ENCODE measurements at regions of chr17 and their contacts with region 1.

Region 1: DNA sequence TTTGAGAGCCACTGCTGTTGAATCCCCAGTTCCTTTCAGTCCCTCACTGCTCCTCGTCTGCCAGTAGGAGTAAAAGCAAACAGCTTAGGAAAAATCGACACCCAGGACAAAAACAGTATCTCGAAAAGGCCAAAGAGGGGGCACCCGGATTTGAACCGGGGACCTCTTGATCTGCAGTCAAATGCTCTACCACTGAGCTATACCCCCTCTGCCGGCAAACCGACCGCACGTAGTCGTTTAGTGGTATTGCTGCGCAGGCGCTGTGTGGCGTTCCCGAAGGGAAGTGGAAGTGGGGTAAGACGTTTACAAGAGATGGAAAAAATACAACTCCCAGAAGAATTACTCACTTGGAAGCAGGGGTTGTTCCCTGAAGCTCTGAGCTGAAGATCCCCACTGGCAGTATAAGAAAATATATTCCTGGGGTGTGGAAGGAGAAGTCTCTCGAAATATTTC is 2.2 kb upstream of the PLXDC1 start:
- DNase-seq: peak; percentile 92
- ATAC-seq: peak; percentile 54
- H3K4me3 Mint-ChIP-seq: peak overlapping the region; percentile 97
- H3K27ac Mint-ChIP-seq: peak overlapping the region; percentile 99
- H3K4me1 Mint-ChIP-seq: peaks cover 36% of the 10 kb centered on the region
- H3K27me3 Mint-ChIP-seq: peaks cover 38% of the 10 kb centered on the region
- CTCF ChIP-seq: no peak

Region 2: DNA sequence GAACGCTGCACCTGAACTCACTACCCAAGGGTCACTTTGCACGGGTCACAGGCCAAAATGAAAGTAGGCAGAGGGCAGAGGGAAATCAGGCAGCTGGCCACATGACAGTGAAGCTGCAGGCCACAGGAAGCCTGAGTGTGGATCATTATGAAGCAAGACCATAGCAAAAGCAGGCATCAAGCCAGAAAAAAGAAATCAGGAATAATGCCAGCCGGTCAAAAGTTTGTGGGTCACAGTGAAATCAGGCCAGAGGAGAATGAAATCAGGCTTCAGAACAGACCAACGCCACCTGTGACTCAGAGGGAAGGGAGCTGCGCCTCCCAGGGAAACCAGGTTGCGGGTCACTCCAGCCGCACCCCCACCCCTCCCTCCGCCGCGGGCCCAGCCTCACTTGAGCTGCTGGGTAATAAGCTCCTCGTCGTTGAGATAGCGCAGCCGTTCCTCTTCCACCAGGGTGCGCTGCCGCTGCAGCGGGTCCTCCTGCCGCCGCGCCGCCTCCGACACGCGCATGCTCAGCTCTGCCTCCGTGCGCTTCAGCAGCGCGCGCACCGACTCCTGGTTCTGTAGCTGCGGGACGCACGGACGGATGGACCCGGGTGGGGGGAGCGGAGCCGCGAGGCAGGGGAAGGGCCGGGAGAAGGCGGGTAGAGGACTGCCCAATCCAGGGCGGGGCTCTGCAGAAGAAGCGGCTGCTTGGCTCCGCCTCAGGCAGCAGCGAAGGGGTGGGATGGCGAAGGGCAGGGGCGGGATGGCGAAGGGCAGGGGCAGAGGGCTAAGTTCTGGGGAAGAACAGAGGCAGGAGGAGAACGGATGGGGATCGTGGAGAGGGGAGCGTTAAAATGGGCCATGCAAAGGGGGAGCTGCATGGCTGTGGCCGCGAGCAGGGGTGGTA is 595.5 kb before region 1 on chr17:
- CTCF ChIA-PET with region 1: interaction called, 4 read pairs
- POLR2A ChIA-PET with region 1: no interaction called
- intact Hi-C with region 1: loop called (anchors 1 kb)
- DNase-seq: peak; percentile 86
- ATAC-seq: peak; percentile 80
- H3K4me3 Mint-ChIP-seq: peak overlapping the region; percentile 91
- H3K27ac Mint-ChIP-seq: peak overlapping the region; percentile 31
- H3K4me1 Mint-ChIP-seq: peaks cover 25% of the 10 kb centered on the region
- H3K27me3 Mint-ChIP-seq: peaks cover 18% of the 10 kb centered on the region
- CTCF ChIP-seq: no peak

Region 3: DNA sequence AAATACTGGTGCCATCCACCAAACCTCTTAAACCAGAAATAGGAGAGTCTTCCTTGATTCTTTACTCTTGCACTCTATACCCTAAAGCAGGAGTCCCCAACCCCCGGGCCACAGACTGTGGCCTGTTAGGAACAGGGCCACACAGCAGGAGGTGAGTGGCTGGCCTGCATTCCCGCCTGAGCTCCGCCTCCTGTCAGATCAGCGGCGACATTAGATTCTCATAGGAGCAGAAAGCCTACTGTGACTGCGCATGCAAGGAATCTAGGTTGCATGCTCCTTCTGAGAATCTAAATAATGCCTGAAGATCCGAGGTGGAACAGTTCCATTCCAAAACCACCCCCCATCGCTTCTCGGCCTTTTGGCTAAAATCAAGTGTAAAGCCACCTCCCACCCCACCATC is 517.6 kb before region 1 on chr17:
- CTCF ChIA-PET with region 1: no interaction called
- POLR2A ChIA-PET with region 1: no interaction called
- intact Hi-C with region 1: no loop called
- DNase-seq: no peak
- ATAC-seq: no peak
- H3K4me3 Mint-ChIP-seq: no peak overlapping the region
- H3K27ac Mint-ChIP-seq: no peak overlapping the region
- H3K4me1 Mint-ChIP-seq: no peaks in the 10 kb centered on the region
- H3K27me3 Mint-ChIP-seq: peaks cover 19% of the 10 kb centered on the region
- CTCF ChIP-seq: no peak

Region 4: GRCh38 chr17:38735161-38735997 is 418.2 kb before region 1 on chr17:
- CTCF ChIA-PET with region 1: no interaction called
- POLR2A ChIA-PET with region 1: no interaction called
- intact Hi-C with region 1: loop called (anchors 1 kb)
- DNase-seq: peak; percentile 76
- ATAC-seq: peak; percentile 39
- H3K4me3 Mint-ChIP-seq: no peak overlapping the region
- H3K27ac Mint-ChIP-seq: no peak overlapping the region
- H3K4me1 Mint-ChIP-seq: peaks cover 26% of the 10 kb centered on the region
- H3K27me3 Mint-ChIP-seq: peaks cover 5% of the 10 kb centered on the region
- CTCF ChIP-seq: no peak

Region 5: DNA sequence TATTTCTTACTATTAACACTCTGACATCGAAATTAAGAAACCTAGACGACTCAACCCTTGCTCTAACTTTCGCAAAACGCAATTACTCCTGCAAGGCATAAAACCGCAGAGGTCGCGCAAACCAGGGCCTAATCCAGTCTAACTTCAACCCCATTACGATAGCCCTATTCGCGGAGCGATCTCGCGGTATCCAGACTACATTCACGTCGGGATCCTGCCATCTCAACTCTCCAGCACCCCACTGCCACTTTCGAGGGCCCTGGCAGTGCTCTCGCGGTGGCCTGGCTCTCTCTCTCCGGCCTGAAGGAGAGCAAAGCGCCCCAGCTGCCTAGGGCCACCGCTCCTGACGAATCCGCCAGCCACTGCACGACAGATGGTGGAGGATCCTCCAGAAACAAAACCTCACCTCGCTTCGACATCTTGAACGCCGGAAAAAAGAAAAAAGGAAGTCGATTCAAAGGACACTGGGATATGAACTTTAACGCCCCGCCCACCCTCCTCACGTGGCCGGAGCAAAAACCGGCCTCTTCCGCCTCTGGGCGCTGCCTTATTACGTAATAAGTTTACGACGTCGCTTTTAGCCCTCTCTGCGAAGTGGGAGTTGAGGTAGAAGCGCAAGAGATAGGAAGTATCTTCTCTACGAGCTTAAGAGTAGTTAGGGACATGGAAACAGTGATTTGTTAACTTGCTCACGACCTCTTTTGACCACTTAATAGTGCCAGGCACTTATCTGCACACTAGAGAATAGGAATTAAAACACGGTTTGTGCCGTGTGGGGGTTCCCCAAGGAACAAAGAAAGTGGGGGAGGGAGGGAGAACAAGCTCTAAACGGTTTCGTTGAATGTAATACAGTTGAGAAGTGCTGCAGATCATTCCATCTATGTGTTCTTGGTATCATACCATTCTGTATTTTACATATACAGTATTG is 300.1 kb before region 1 on chr17 and contains the start of gene RPL23:
- CTCF ChIA-PET with region 1: interaction called, 4 read pairs
- POLR2A ChIA-PET with region 1: interaction called, 16 read pairs
- intact Hi-C with region 1: loop called (anchors 1 kb)
- DNase-seq: peak; percentile 79
- ATAC-seq: peak; percentile 86
- H3K4me3 Mint-ChIP-seq: peak within 1 kb of the TSS; percentile 99
- H3K27ac Mint-ChIP-seq: peak within 1 kb of the TSS; percentile 100
- H3K4me1 Mint-ChIP-seq: peaks cover 43% of the 10 kb centered on the region
- H3K27me3 Mint-ChIP-seq: no peaks in the 10 kb centered on the region
- CTCF ChIP-seq: no peak
- total RNA-seq, gene RPL23: 2,652 and 3,293 TPM in 2 replicates

Region 6: GRCh38 chr17:38967290-38967738 is 186.3 kb before region 1 on chr17 and contains the start of gene FBXO47:
- CTCF ChIA-PET with region 1: interaction called, 3 read pairs
- POLR2A ChIA-PET with region 1: interaction called, 7 read pairs
- intact Hi-C with region 1: loop called (anchors 5 kb)
- DNase-seq: peak; percentile 64
- ATAC-seq: peak; percentile 99
- H3K4me3 Mint-ChIP-seq: peak within 1 kb of the TSS; percentile 78
- H3K27ac Mint-ChIP-seq: peak within 1 kb of the TSS; percentile 85
- H3K4me1 Mint-ChIP-seq: peaks cover 10% of the 10 kb centered on the region
- H3K27me3 Mint-ChIP-seq: no peaks in the 10 kb centered on the region
- CTCF ChIP-seq: no peak
- total RNA-seq, gene FBXO47: not detected in 2 replicates

Region 7: GRCh38 chr17:39164675-39165143 is 11.1 kb after region 1 on chr17:
- CTCF ChIA-PET with region 1: interaction called, 42 read pairs
- POLR2A ChIA-PET with region 1: interaction called, 18 read pairs
- intact Hi-C with region 1: loop called (anchors 1 kb)
- DNase-seq: peak; percentile 64
- ATAC-seq: peak; percentile 95
- H3K4me3 Mint-ChIP-seq: peak overlapping the region; percentile 89
- H3K27ac Mint-ChIP-seq: no peak overlapping the region
- H3K4me1 Mint-ChIP-seq: peaks cover 23% of the 10 kb centered on the region
- H3K27me3 Mint-ChIP-seq: peaks cover 26% of the 10 kb centered on the region
- CTCF ChIP-seq: no peak

Region 8: DNA sequence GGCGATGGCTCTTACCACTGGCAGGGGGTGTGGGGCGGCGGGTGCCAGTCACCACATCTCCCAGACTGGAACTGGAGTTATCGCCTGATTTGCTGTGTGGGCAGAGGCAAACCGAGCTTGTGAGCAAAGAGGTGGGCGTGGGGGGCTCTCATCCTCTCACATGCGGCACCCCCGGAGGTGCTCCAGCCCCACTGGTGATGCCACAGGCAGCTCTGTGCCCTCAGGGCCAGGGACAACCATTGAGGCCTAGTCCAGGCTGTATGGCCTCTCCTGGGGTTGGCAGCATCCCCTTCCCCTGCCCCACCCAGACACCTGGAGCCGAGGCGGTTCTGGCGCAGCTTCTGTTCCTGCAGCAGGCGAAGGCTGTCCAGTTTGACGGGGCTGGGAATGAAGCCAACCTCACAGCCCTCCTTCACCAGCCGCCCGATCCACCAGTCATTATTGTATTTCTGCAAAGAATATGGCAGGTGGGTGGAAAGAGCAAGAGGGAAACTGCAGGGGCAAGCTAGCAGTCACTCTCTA is 32.9 kb after region 1 on chr17:
- CTCF ChIA-PET with region 1: no interaction called
- POLR2A ChIA-PET with region 1: no interaction called
- intact Hi-C with region 1: no loop called
- DNase-seq: no peak
- ATAC-seq: no peak
- H3K4me3 Mint-ChIP-seq: no peak overlapping the region
- H3K27ac Mint-ChIP-seq: no peak overlapping the region
- H3K4me1 Mint-ChIP-seq: no peaks in the 10 kb centered on the region
- H3K27me3 Mint-ChIP-seq: no peaks in the 10 kb centered on the region
- CTCF ChIP-seq: no peak

Region 9: GRCh38 chr17:39235555-39236449 is 82.2 kb after region 1 on chr17:
- CTCF ChIA-PET with region 1: interaction called, 6 read pairs
- POLR2A ChIA-PET with region 1: interaction called, 3 read pairs
- intact Hi-C with region 1: loop called (anchors 2 kb)
- DNase-seq: no peak
- ATAC-seq: peak; percentile 27
- H3K4me3 Mint-ChIP-seq: no peak overlapping the region
- H3K27ac Mint-ChIP-seq: no peak overlapping the region
- H3K4me1 Mint-ChIP-seq: peaks cover 27% of the 10 kb centered on the region
- H3K27me3 Mint-ChIP-seq: peaks cover 15% of the 10 kb centered on the region
- CTCF ChIP-seq: no peak

Region 10: GRCh38 chr17:39676198-39676819 is 522.7 kb after region 1 on chr17:
- CTCF ChIA-PET with region 1: no interaction called
- POLR2A ChIA-PET with region 1: no interaction called
- intact Hi-C with region 1: no loop called
- DNase-seq: no peak
- ATAC-seq: peak; percentile 51
- H3K4me3 Mint-ChIP-seq: peak overlapping the region; percentile 29
- H3K27ac Mint-ChIP-seq: peak overlapping the region; percentile 90
- H3K4me1 Mint-ChIP-seq: peaks cover 87% of the 10 kb centered on the region
- H3K27me3 Mint-ChIP-seq: no peaks in the 10 kb centered on the region
- CTCF ChIP-seq: no peak